H1 (cell line): ENCODE measurements at regions of chr3 and their contacts with region 1.

Region 1: GRCh38 chr3:158109804-158110657 is at the start of gene RSRC1:
- DNase-seq: peak in 1 of 2 experiments; percentile 89
- H3K4me3 ChIP-seq: peak within 1 kb of the TSS; percentile 87 to 95 (median 92)
- H3K27ac ChIP-seq: peak within 1 kb of the TSS; percentile 66; the same call in 1 of the 2 replicates
- H3K4me1 ChIP-seq: peaks cover 0 to 12% (median 2%) of the 10 kb centered on the region in 4 experiments; a peak in 5 of 7 replicates
- H3K27me3 ChIP-seq: peaks cover 19 to 44% (median 36%) of the 10 kb centered on the region in 4 experiments
- CTCF ChIP-seq: peak in 1 of 3 experiments; percentile 8; a peak in 1 of 4 replicates
- EP300 ChIP-seq: peak in 1 of 2 experiments; percentile 74; a peak in 1 of 3 replicates
- POLR2A ChIP-seq: peak; percentile 41 to 95
- RAD21 ChIP-seq: no peak
- total RNA-seq, gene RSRC1: 27.9 and 29.5 TPM in 2 replicates

Region 2: DNA sequence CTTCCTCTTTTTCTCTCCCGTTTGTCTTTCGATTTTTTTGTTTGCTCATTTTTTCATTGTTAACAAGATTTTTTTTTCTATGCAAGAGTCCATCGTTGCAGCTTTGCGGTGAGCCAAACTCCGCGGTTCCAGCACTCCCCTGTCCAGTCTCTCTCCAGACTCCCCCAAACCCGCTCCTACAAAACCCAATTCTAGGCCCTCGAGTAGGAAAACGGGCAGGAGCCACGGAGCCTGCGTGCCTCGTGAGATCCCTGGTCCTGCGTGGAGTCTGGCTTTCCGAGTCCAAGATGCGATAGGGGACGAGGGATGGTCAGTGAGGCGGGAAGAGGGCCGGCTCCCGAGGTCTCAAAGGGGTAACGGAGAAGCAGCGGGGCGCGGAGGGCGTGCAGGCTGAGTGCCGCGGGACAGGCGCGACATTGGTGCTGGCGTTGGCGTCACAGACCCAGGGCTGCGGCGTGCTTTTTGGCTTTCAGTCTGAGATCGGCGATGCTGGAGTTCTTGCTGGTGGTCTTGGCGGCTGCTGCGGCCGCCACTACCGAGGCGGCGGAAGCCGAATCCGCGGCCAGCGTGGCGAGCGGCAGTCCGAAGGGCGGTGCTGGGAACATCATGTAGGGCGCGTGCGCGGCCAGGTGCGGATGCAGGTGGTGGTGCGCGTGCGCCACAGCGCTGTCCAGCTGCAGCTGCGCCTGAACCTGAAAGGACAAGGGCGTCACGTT is 12.3 kb before region 1 on chr3:
- CTCF ChIA-PET with region 1: interaction called, 43 read pairs
- POLR2A ChIA-PET with region 1: interaction called, 11 read pairs
- DNase-seq: peak; percentile 85 to 91
- H3K4me3 ChIP-seq: peak overlapping the region; percentile 65 to 85 (median 78)
- H3K27ac ChIP-seq: no peak overlapping the region
- H3K4me1 ChIP-seq: peaks cover 2 to 14% (median 6%) of the 10 kb centered on the region in 4 experiments
- H3K27me3 ChIP-seq: peaks cover 60 to 94% (median 79%) of the 10 kb centered on the region in 4 experiments
- CTCF ChIP-seq: no peak
- EP300 ChIP-seq: no peak
- POLR2A ChIP-seq: no peak
- RAD21 ChIP-seq: no peak; a peak in 1 of 4 replicates

Region 3: GRCh38 chr3:158181096-158181495 is 71.1 kb after region 1 on chr3:
- CTCF ChIA-PET with region 1: no interaction called
- POLR2A ChIA-PET with region 1: no interaction called
- DNase-seq: no peak
- H3K4me3 ChIP-seq: no peak overlapping the region
- H3K27ac ChIP-seq: no peak overlapping the region
- H3K4me1 ChIP-seq: no peaks in the 10 kb centered on the region
- H3K27me3 ChIP-seq: no peaks in the 10 kb centered on the region
- CTCF ChIP-seq: no peak
- EP300 ChIP-seq: no peak
- POLR2A ChIP-seq: no peak
- RAD21 ChIP-seq: no peak